Mammary epithelial cell (primary cell): ENCODE measurements at regions of chr3 and their contacts with region 1.

Region 1: DNA sequence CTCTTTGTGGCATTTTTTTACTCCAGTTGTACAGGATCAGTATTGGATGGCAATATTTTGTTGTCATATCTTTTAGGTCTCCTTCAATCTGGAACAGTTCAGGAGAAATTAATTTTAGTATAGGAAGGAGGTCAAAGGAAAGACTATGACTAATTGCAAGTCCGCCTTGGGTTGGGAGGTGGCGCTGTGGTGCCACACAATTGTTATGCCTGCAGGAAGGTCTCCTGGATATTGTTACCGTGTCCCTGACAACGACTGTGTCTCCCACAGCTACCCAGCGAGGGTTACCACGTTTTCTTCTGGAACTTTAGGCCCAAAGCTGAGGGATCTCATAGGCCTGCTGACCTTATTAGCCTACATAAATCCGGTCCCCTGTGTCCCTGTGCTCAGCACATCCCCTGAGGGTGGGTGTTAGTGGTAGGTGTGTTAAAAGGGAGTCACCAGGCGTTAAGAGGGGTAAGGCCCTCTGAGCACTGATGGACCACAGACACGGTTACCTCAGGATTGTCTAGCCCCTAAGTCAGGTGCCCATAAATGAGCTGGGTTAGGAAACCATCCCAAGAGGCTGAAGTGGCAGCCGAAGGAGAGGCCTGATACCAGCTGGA is 31.5 kb downstream of the KCNAB1 start:
- DNase-seq: peak; percentile 50
- H3K4me3 ChIP-seq: no peak overlapping the region
- H3K27ac ChIP-seq: no peak overlapping the region
- H3K4me1 ChIP-seq: no peaks in the 10 kb centered on the region
- H3K27me3 ChIP-seq: no peaks in the 10 kb centered on the region
- CTCF ChIP-seq: peak; percentile 79 to 87

Region 2: DNA sequence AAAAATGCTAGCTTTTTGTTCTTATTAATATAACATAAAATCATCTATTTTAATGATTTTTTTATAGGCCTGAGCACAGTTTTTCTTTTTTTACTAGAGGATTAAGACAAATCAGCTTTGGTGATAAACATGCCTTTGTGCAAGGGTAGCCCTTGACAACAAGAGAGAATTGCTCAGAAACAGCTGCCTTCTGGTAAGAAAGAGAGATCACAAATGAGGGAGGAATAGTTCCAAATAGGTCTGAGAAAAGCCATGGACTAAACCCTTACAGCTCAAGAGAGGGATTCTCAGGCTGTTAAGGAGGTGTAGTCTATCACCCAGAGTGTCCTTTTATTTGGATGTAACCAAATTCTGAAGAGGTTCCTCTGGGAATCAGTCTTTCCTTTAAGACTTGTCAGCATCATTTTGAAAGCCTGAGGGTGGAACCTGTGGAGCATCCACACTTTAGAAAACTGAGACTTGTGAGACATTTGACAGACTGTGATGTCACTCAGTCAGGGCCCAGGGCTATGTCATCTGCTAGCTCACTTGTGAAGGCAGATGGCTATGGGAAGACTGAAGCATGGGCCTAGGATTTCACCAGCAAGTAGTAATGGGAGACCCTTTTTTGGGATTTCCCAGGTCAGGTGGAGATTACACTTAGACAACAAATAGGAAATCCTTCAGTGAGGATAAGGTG is 134.4 kb before region 1 on chr3:
- CTCF ChIA-PET with region 1: no interaction called
- dilution Hi-C with region 1: no loop called
- in situ Hi-C with region 1: no loop called
- intact Hi-C with region 1: loop called (anchors 5 kb)
- DNase-seq: no peak
- H3K4me3 ChIP-seq: no peak overlapping the region
- H3K27ac ChIP-seq: no peak overlapping the region
- H3K4me1 ChIP-seq: no peaks in the 10 kb centered on the region
- H3K27me3 ChIP-seq: no peaks in the 10 kb centered on the region
- CTCF ChIP-seq: no peak

Region 3: GRCh38 chr3:156174229-156174847 is 22.4 kb after region 1 on chr3:
- CTCF ChIA-PET with region 1: no interaction called
- dilution Hi-C with region 1: no loop called
- in situ Hi-C with region 1: no loop called
- intact Hi-C with region 1: no loop called
- DNase-seq: peak; percentile 44
- H3K4me3 ChIP-seq: no peak overlapping the region
- H3K27ac ChIP-seq: no peak overlapping the region
- H3K4me1 ChIP-seq: peaks cover 7% of the 10 kb centered on the region
- H3K27me3 ChIP-seq: no peaks in the 10 kb centered on the region
- CTCF ChIP-seq: peak; percentile 26 to 70

Region 4: DNA sequence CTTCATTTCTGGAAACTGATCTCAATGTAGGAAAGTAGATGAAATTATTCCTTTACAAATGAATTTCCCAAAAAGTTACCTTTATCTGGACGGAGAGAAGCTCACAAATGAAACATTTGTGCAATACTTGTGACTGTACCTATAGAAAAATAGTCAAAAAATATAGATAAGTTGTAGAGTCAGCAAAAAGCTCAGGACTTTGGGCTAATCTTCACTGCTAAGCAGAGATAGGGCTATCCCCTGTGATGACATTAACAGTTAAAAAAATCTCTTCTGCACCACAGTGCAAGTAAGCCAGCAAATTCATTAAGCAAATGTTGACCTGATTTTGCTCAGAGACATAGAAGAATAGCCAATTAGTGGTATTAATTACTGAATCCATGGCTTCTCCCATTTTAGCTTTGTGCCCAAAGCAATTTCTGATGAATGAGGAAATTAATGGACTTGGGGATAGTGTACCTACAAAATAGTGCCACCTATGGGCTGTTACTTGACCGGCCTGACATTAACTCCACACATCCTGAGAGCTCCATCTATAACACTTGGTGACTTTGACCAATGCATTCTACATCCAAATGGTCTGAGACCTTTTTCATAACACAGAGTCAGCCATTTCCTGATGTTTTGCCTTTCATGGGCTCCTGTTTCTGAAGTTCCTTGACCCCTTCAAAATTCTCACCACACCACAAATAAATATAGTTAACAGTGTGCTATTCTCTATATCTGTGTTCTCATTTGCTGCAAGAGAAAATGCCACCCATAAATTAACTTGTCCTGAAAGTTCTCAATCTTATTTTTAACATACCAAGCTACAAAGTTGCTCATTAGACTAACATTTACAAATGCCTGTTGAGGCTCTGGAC is 298.0 kb after region 1 on chr3:
- CTCF ChIA-PET with region 1: interaction called, 3 read pairs
- dilution Hi-C with region 1: no loop called
- in situ Hi-C with region 1: no loop called
- intact Hi-C with region 1: loop called (anchors 1 kb)
- DNase-seq: peak; percentile 28
- H3K4me3 ChIP-seq: no peak overlapping the region
- H3K27ac ChIP-seq: no peak overlapping the region
- H3K4me1 ChIP-seq: no peaks in the 10 kb centered on the region
- H3K27me3 ChIP-seq: peaks cover 3% of the 10 kb centered on the region
- CTCF ChIP-seq: peak; percentile 79 to 82

Region 5: DNA sequence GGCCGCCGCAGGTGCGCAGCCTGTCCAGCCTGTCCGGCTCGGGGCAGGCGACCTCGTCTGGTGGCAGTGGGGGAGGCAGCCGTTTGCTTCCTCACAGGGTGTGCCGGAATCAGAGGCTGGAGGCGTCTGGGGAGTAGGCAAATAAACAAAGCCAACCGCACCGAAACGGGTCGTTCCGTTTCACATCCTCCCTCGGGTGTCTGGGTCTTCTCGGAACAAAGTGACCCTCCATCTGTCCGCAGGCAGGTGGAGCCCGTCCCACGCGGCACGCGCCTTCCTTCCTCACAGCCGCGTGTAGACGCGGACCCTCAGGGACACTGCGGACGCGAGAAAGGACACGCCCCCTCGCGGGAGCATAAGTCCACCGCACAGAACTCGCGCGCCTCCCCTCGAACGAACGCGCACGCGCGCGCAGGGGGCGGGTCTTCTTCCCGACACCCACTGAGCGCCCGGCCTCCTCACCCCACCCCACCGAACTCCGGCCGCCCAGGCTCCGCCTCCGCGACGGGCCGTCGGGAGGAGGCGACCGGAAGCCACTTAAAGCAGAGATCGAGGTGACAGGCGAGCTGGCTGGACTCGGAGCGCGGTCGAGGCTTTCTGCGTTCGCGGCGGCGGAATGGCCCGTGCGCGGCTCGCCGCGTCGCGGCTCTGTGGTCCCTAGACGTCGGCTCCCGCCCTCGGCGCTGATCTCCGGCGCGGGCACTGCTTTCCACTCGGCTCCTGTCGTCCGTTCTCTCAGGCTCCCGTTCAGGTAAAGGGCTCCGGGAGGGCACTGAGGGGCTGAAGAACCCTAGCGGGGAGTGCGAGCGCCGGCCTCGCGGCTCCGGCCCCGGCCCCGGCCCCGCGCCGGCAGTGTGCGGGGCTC is 522.4 kb after region 1 on chr3 and contains the start of gene TIPARP:
- CTCF ChIA-PET with region 1: no interaction called
- dilution Hi-C with region 1: no loop called
- in situ Hi-C with region 1: no loop called
- intact Hi-C with region 1: loop called (anchors 1 kb)
- DNase-seq: peak; percentile 98
- H3K4me3 ChIP-seq: peak within 1 kb of the TSS; percentile 61 to 94 (median 76)
- H3K27ac ChIP-seq: peak within 1 kb of the TSS; percentile 99
- H3K4me1 ChIP-seq: peaks cover 22% of the 10 kb centered on the region
- H3K27me3 ChIP-seq: no peaks in the 10 kb centered on the region
- CTCF ChIP-seq: peak; percentile 5 to 44
- total RNA-seq, gene TIPARP: 171 to 229 TPM

Region 6: GRCh38 chr3:157201648-157202278 is 1049.8 kb after region 1 on chr3:
- CTCF ChIA-PET with region 1: no interaction called
- dilution Hi-C with region 1: no loop called
- in situ Hi-C with region 1: no loop called
- intact Hi-C with region 1: loop called (anchors 2 kb)
- DNase-seq: peak; percentile 28
- H3K4me3 ChIP-seq: no peak overlapping the region
- H3K27ac ChIP-seq: no peak overlapping the region
- H3K4me1 ChIP-seq: no peaks in the 10 kb centered on the region
- H3K27me3 ChIP-seq: no peaks in the 10 kb centered on the region
- CTCF ChIP-seq: peak; percentile 49 to 58